ENCODE measurements at regions of chr22 and their contacts with region 1.

Region 1: DNA sequence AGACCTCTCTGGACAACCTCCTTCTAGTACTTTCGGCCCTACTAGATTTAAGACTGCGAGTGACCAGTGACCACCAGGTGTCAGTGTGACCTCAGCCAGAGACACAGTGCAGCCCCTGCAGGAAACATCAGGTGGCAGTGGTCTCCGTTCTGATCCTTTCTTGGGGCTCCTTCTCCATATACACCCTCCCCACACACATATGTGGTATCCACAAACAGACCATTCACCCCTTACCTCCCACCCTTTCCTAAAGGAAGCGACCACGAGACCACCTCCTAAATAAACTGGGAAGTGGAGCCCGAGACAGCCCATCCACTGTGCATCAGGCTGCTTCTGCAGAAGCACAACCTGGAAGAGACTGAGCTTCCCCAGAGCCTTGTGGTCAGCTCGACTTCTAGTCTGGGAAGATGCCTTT is 38.5 kb upstream of the CYP2D6 start:
- DNase-seq: peak; percentile 66 to 80 (median 77)
- H3K4me3 ChIP-seq: no peak overlapping the region
- H3K4me3 Mint-ChIP-seq: no peak overlapping the region
- H3K27ac ChIP-seq: no peak overlapping the region
- H3K27ac Mint-ChIP-seq: peak overlapping the region; percentile 35 to 92 (median 70)
- H3K4me1 ChIP-seq: peaks cover 18% of the 10 kb centered on the region
- H3K4me1 Mint-ChIP-seq: peaks cover 25 to 46% (median 32%) of the 10 kb centered on the region in 4 donors
- H3K27me3 ChIP-seq: no peaks in the 10 kb centered on the region
- H3K27me3 Mint-ChIP-seq: no peaks in the 10 kb centered on the region

Region 2: DNA sequence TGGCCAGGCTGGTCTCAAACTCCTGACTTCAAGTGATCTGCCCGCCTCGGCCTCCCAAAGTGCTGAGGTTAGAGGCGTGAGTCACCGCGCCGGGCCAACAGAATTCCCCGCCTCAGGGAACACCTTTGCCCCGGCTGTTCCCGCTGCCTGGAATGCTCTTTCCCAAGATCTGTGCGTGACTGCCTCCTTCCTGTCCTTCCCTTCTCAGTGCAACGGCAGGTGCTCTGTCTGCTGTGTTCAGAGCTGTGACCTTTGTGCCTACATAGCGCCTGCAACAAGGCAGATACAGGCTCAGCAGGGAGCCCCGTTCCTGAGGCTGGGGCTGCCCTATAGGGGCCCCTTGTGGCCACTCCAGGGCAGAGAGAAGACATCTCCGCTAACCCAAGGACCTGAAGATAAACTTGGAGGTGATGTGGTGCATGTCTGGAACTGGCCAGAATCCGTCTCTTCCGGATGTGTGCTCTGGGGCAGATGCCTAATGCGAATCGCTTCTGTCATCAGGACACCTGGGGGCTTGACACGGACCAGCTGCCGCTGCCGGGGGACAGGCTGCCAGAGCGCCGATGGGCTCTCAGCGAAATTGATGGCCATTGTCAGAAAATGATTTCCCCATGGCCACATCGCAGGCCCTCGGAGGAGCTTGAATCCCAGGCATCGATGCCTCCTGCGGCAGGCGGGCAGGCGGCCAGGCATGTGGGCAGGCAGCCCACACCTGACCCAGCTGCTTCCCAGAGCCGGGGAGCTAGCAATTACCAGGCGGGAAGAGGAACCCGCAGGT is 144.9 kb after region 1 on chr22:
- CTCF ChIA-PET with region 1: interaction called, 3 read pairs
- POLR2A ChIA-PET with region 1: no interaction called
- intact Hi-C with region 1: loop called (anchors 1 kb)
- DNase-seq: peak; percentile 44 to 61 (median 52)
- H3K4me3 ChIP-seq: no peak overlapping the region
- H3K4me3 Mint-ChIP-seq: peak overlapping the region in 6 of 8 donors; percentile 36 to 78 (median 65)
- H3K27ac ChIP-seq: no peak overlapping the region
- H3K27ac Mint-ChIP-seq: peak overlapping the region in 5 of 7 donors; percentile 57 to 79 (median 72)
- H3K4me1 ChIP-seq: peaks cover 54% of the 10 kb centered on the region
- H3K4me1 Mint-ChIP-seq: peaks cover 27 to 55% (median 39%) of the 10 kb centered on the region in 4 donors
- H3K27me3 ChIP-seq: no peaks in the 10 kb centered on the region
- H3K27me3 Mint-ChIP-seq: no peaks in the 10 kb centered on the region

Region 3: DNA sequence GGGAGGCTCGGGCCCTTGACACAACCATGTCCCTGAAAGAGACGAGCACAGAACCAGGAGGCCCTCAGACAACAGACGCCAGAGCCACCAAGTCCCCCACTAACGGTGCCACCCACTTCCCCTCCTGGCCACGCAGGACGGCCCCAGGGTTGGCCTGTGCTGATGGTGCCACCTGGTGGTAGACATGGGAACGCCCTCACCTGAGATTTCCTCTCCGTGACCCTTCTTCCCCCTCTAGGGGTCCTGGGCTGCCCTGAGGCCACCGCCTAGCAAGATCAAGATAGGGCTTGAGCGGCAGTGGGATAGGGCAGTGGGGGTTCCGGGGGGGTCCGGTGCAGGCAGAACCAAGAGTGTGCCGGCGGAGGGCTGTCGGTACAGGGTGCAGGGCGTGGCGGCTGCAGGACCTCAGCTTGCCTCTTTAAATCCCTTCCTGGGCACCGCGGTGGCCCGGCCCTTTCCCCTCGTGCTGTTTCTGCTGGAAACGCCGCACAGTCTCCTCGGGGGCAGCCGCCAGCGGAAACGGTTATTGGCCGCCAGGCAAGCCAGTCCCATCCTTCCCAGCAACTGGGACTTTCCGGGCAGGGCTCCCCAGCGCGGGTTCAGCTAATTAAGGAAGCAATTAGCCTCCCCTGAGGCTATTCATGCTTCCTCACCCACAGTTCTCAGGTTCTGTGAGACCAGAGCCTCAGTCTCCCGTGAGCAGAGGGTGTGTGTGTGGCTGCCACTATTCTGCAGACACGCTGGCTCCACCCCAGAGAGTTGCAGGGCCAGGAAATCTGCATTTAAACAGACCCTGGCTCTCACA is 268.6 kb after region 1 on chr22:
- CTCF ChIA-PET with region 1: interaction called, 38 read pairs
- POLR2A ChIA-PET with region 1: no interaction called
- intact Hi-C with region 1: loop called (anchors 1 kb)
- DNase-seq: peak; percentile 80 to 86 (median 81)
- H3K4me3 ChIP-seq: peak overlapping the region; percentile 48 to 79
- H3K4me3 Mint-ChIP-seq: peak overlapping the region; percentile 77 to 91 (median 84)
- H3K27ac ChIP-seq: peak overlapping the region; percentile 3
- H3K27ac Mint-ChIP-seq: peak overlapping the region in 5 of 7 donors; percentile 48 to 83 (median 76)
- H3K4me1 ChIP-seq: peaks cover 10% of the 10 kb centered on the region
- H3K4me1 Mint-ChIP-seq: peaks cover 4 to 17% (median 7%) of the 10 kb centered on the region in 4 donors
- H3K27me3 ChIP-seq: no peaks in the 10 kb centered on the region
- H3K27me3 Mint-ChIP-seq: peaks cover 0 to 2% of the 10 kb centered on the region in 2 donors

Region 4: GRCh38 chr22:42473484-42474193 is 304.6 kb after region 1 on chr22:
- CTCF ChIA-PET with region 1: interaction called, 3 read pairs
- POLR2A ChIA-PET with region 1: no interaction called
- intact Hi-C with region 1: loop called (anchors 1 kb)
- DNase-seq: peak in 4 of 5 donors; percentile 20 to 40 (median 27)
- H3K4me3 ChIP-seq: no peak overlapping the region
- H3K4me3 Mint-ChIP-seq: no peak overlapping the region
- H3K27ac ChIP-seq: no peak overlapping the region
- H3K27ac Mint-ChIP-seq: no peak overlapping the region
- H3K4me1 ChIP-seq: peaks cover 9% of the 10 kb centered on the region
- H3K4me1 Mint-ChIP-seq: peaks cover 5 to 7% (median 6%) of the 10 kb centered on the region in 4 donors
- H3K27me3 ChIP-seq: no peaks in the 10 kb centered on the region
- H3K27me3 Mint-ChIP-seq: peaks cover 0 to 4% of the 10 kb centered on the region in 2 donors